Activated B cell treated with CpG ODN at 0.5 μM for 24 hours (primary cell): ENCODE measurements at regions of chr11 and their contacts with region 1.

Region 1: GRCh38 chr11:3894128-3894731 is 38.8 kb downstream of the STIM1 start:
- DNase-seq: peak; percentile 84
- ATAC-seq: peak; percentile 97
- H3K4me3 Mint-ChIP-seq: peak overlapping the region; percentile 74
- H3K27ac Mint-ChIP-seq: peak overlapping the region; percentile 88
- H3K4me1 Mint-ChIP-seq: peaks cover 72% of the 10 kb centered on the region
- H3K27me3 Mint-ChIP-seq: no peaks in the 10 kb centered on the region
- CTCF ChIP-seq: no peak

Region 2: GRCh38 chr11:3834664-3835461 is 59.4 kb before region 1 on chr11:
- CTCF ChIA-PET with region 1: no interaction called
- POLR2A ChIA-PET with region 1: interaction called, 20 read pairs
- intact Hi-C with region 1: no loop called
- DNase-seq: no peak
- ATAC-seq: no peak
- H3K4me3 Mint-ChIP-seq: peak overlapping the region; percentile 65
- H3K27ac Mint-ChIP-seq: peak overlapping the region; percentile 76
- H3K4me1 Mint-ChIP-seq: peaks cover 93% of the 10 kb centered on the region
- H3K27me3 Mint-ChIP-seq: no peaks in the 10 kb centered on the region
- CTCF ChIP-seq: no peak

Region 3: GRCh38 chr11:3880724-3881123 is 13.5 kb before region 1 on chr11:
- CTCF ChIA-PET with region 1: interaction called, 3 read pairs
- POLR2A ChIA-PET with region 1: interaction called, 9 read pairs
- intact Hi-C with region 1: loop called (anchors 1 kb)
- DNase-seq: no peak
- ATAC-seq: peak; percentile 80
- H3K4me3 Mint-ChIP-seq: peak overlapping the region; percentile 60
- H3K27ac Mint-ChIP-seq: peak overlapping the region; percentile 87
- H3K4me1 Mint-ChIP-seq: peaks cover 85% of the 10 kb centered on the region
- H3K27me3 Mint-ChIP-seq: no peaks in the 10 kb centered on the region
- CTCF ChIP-seq: no peak

Region 4: DNA sequence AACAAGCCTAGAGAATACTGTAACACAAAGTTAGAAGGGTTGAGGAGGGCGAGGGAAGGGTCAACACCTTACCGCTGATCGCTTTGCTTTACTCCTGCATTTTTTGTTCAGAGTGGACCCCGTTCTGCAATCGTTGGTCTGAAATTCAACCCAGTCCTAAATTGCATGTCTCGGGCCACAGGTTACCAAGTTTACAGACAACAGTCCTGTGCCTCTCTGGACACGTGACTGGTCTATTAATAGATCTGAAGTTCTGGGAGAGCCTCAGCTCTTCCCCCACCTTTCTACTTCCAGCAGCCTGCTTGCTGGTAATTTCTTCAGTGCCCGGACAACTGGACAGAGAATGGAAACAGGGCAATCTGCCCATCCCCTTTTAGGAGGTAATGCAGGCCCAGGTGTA is 35.4 kb after region 1 on chr11:
- CTCF ChIA-PET with region 1: interaction called, 3 read pairs
- POLR2A ChIA-PET with region 1: interaction called, 3 read pairs
- intact Hi-C with region 1: loop called (anchors 1 kb)
- DNase-seq: no peak
- ATAC-seq: no peak
- H3K4me3 Mint-ChIP-seq: no peak overlapping the region
- H3K27ac Mint-ChIP-seq: no peak overlapping the region
- H3K4me1 Mint-ChIP-seq: peaks cover 55% of the 10 kb centered on the region
- H3K27me3 Mint-ChIP-seq: no peaks in the 10 kb centered on the region
- CTCF ChIP-seq: no peak

Region 5: GRCh38 chr11:3959015-3959919 is 65.0 kb after region 1 on chr11:
- CTCF ChIA-PET with region 1: interaction called, 4 read pairs
- POLR2A ChIA-PET with region 1: interaction called, 3 read pairs
- intact Hi-C with region 1: loop called (anchors 2 kb)
- DNase-seq: no peak
- ATAC-seq: peak; percentile 92
- H3K4me3 Mint-ChIP-seq: no peak overlapping the region
- H3K27ac Mint-ChIP-seq: peak overlapping the region; percentile 38
- H3K4me1 Mint-ChIP-seq: peaks cover 60% of the 10 kb centered on the region
- H3K27me3 Mint-ChIP-seq: no peaks in the 10 kb centered on the region
- CTCF ChIP-seq: no peak